ENCODE measurements at regions of chr9 and their contacts with region 1.

Region 1: GRCh38 chr9:1726993-1727759 is 288.0 kb upstream of the SMARCA2 start:
- ATAC-seq: peak in 2 of 8 experiments; percentile 18 to 85
- H3K4me3 ChIP-seq: no peak overlapping the region
- H3K27ac ChIP-seq: no peak overlapping the region
- H3K4me1 ChIP-seq: no peaks in the 10 kb centered on the region

Region 2: GRCh38 chr9:1337161-1337560 is 390.0 kb before region 1 on chr9:
- in situ Hi-C with region 1: no loop called
- ATAC-seq: peak in 1 of 8 experiments; percentile 67
- H3K4me3 ChIP-seq: no peak overlapping the region
- H3K27ac ChIP-seq: no peak overlapping the region
- H3K4me1 ChIP-seq: no peaks in the 10 kb centered on the region

Region 3: DNA sequence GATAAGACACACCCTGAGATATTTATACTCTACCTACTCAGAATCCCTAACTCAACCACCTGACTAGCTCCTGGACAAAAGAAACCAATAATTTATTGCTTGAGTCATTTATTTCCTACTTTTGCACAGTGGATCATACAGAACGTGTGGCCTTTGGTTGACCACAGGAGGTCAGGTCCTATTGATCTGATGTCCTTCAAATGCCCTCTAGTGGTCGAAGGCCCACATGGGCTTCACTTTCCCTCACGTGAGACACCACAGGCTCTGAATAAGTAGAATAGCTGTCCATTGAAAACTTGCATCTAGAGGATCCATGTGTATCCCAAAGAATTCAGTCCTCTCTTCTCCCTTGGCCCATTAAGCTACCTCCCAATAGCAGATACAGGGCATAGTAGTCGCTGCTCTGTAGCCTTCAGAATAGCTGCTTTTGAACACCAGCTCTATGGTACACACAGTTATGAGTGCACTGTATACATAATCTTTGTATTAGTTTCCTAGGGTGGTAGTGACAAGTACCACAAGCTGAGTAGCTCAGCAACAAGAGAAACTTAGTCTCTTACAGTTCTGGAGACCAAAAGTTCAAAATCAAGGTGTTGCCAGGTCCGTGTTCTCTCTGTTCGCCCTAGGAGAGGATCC is 110.4 kb after region 1 on chr9:
- in situ Hi-C with region 1: loop called in 1 of 9 experiments (anchors 25 kb)
- ATAC-seq: peak in 4 of 8 experiments; percentile 43 to 95 (median 80)
- H3K4me3 ChIP-seq: no peak overlapping the region
- H3K27ac ChIP-seq: no peak overlapping the region
- H3K4me1 ChIP-seq: no peaks in the 10 kb centered on the region

Measured in motor neuron (in vitro differentiated cells).